Activated CD4-positive, alpha-beta memory T cell treated with anti-CD3 and anti-CD28 coated beads for 36 hours (primary cell): ENCODE measurements at regions of chr17 and their contacts with region 1.

Region 1: DNA sequence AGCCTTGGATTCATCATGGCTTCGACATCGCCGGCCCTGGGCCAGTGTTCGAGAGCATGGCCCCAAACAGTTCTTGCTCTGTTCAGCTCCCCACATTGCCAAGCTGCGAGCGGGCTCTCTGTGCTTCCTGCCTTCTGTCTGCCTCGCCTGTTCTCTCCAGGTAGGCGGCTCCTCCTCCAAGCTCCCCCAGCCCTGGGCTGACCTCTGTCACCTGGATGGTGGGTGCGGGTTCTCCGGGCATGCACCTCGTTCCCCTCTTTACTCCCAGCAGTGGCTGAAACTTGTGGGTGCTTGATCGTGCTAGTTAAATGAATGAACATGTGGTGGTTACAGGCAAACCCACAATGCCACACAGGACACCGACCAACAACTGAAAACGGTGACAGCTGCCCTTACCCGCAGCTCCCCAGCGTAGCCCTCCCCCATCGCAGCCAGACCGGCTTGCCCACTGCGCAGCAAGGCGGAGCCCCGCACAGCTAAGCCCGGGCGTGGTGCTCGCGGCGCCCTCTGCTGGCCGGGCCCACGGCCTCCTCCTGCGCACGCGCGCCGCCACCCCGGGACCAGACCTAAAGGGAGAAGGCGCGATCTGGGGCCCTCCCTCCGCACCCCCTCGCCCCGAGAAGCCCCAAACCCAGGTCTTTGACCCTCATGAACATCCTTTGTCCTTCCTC is 23.0 kb upstream of the EIF1 start:
- DNase-seq: peak; percentile 94
- H3K4me3 Mint-ChIP-seq: peak overlapping the region; percentile 76
- H3K27ac Mint-ChIP-seq: peak overlapping the region; percentile 95
- H3K4me1 Mint-ChIP-seq: peaks cover 42% of the 10 kb centered on the region
- H3K27me3 Mint-ChIP-seq: no peaks in the 10 kb centered on the region

Region 2: GRCh38 chr17:40803617-40804082 is 862.1 kb before region 1 on chr17:
- CTCF ChIA-PET with region 1: interaction called, 15 read pairs
- POLR2A ChIA-PET with region 1: no interaction called
- intact Hi-C with region 1: loop called (anchors 5 kb)
- DNase-seq: peak; percentile 86
- H3K4me3 Mint-ChIP-seq: no peak overlapping the region
- H3K27ac Mint-ChIP-seq: no peak overlapping the region
- H3K4me1 Mint-ChIP-seq: peaks cover 2% of the 10 kb centered on the region
- H3K27me3 Mint-ChIP-seq: peaks cover 36% of the 10 kb centered on the region

Region 3: GRCh38 chr17:40909351-40909750 is 756.4 kb before region 1 on chr17:
- CTCF ChIA-PET with region 1: interaction called, 28 read pairs
- POLR2A ChIA-PET with region 1: no interaction called
- intact Hi-C with region 1: loop called (anchors 5 kb)
- DNase-seq: peak; percentile 71
- H3K4me3 Mint-ChIP-seq: no peak overlapping the region
- H3K27ac Mint-ChIP-seq: no peak overlapping the region
- H3K4me1 Mint-ChIP-seq: no peaks in the 10 kb centered on the region
- H3K27me3 Mint-ChIP-seq: peaks cover 24% of the 10 kb centered on the region

Region 4: GRCh38 chr17:41403798-41404671 is 261.7 kb before region 1 on chr17:
- CTCF ChIA-PET with region 1: interaction called, 8 read pairs
- POLR2A ChIA-PET with region 1: no interaction called
- intact Hi-C with region 1: loop called (anchors 5 kb)
- DNase-seq: peak; percentile 84
- H3K4me3 Mint-ChIP-seq: peak overlapping the region; percentile 17
- H3K27ac Mint-ChIP-seq: peak overlapping the region; percentile 86
- H3K4me1 Mint-ChIP-seq: peaks cover 42% of the 10 kb centered on the region
- H3K27me3 Mint-ChIP-seq: no peaks in the 10 kb centered on the region

Region 5: DNA sequence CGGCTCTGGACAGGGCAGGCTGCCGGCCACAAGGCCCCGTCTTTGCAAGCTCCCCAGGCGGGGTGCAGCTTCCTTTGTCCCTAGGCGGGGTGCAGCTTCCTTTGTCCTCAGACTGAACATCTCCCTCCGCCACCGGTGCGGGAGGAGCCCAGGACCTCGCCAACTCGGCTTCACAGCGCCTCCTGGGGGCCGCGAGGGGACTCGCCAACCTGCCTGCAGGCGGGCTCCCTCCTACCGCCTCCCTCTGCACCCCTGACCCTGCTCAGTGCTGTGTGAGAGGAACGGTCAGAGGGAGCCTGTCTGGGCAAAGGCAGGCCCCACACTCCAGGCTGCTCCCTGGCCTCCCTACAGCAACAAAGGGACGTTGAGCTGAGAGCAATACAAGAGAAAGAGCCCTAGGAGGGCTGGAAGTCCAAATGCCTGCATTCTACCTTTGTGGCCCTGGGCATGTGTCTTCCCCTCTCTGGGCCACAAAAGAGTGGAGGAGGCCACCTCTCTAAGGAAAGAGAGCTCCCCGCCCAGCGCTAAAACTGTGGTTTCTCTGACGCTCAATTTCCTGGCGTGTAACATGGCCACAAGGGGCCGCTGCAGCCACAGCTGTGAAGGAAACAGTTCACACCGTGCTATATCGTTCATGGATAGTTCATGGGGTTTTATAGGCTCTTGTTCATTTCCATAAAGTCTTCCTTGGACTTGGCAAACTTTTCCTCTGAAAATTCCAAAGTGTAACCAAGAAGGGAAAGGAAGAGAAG is 116.7 kb before region 1 on chr17:
- CTCF ChIA-PET with region 1: interaction called, 142 read pairs
- POLR2A ChIA-PET with region 1: no interaction called
- intact Hi-C with region 1: loop called (anchors 1 kb)
- DNase-seq: peak; percentile 91
- H3K4me3 Mint-ChIP-seq: no peak overlapping the region
- H3K27ac Mint-ChIP-seq: peak overlapping the region; percentile 70
- H3K4me1 Mint-ChIP-seq: peaks cover 21% of the 10 kb centered on the region
- H3K27me3 Mint-ChIP-seq: peaks cover 7% of the 10 kb centered on the region

Region 6: GRCh38 chr17:41648411-41649195 is 17.1 kb before region 1 on chr17:
- CTCF ChIA-PET with region 1: interaction called, 450 read pairs
- POLR2A ChIA-PET with region 1: interaction called, 3 read pairs
- intact Hi-C with region 1: loop called (anchors 1 kb)
- DNase-seq: peak; percentile 87
- H3K4me3 Mint-ChIP-seq: peak overlapping the region; percentile 42
- H3K27ac Mint-ChIP-seq: no peak overlapping the region
- H3K4me1 Mint-ChIP-seq: peaks cover 11% of the 10 kb centered on the region
- H3K27me3 Mint-ChIP-seq: no peaks in the 10 kb centered on the region